ENCODE measurements at regions of chr16 and their contacts with region 1.

Region 1: GRCh38 chr16:3880623-3881498 is at the start of gene CREBBP:
- DNase-seq: peak; percentile 82 to 94 (median 91)
- ATAC-seq: peak; percentile 79 to 93 (median 91)
- H3K4me3 ChIP-seq: peak within 1 kb of the TSS; percentile 60 to 96 (median 86)
- H3K27ac ChIP-seq: peak within 1 kb of the TSS; percentile 65 to 93 (median 84)
- H3K4me1 ChIP-seq: peaks cover 2 to 39% (median 30%) of the 10 kb centered on the region in 12 donors
- H3K27me3 ChIP-seq: no peaks in the 10 kb centered on the region
- CTCF ChIP-seq: no peak
- POLR2A ChIP-seq: peak in 1 of 2 donors; percentile 74
- total RNA-seq, gene CREBBP: 20.0 to 77.6 (median 45.9) TPM

Region 2: DNA sequence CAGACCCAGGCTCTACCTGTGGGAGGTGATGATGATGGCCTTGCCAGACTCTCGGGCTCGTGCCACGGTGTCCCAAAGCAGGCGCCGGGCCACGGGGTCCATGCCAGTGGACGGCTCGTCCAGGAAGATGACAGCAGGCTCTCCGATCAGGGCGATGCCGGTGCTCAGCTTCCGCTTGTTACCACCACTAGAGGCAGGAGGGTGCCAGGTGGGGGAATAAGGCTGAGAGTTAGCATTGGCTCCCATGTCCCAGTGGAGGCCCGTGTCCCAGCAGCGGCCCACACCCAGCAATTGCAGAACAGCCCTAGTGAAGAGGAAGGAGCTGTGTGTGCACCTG is 1602.6 kb before region 1 on chr16:
- intact Hi-C with region 1: no loop called
- DNase-seq: no peak
- ATAC-seq: no peak
- H3K4me3 ChIP-seq: no peak overlapping the region
- H3K27ac ChIP-seq: no peak overlapping the region
- H3K4me1 ChIP-seq: peaks cover 0 to 3% (median 0%) of the 10 kb centered on the region in 12 donors
- H3K27me3 ChIP-seq: no peaks in the 10 kb centered on the region
- CTCF ChIP-seq: no peak
- POLR2A ChIP-seq: no peak

Region 3: DNA sequence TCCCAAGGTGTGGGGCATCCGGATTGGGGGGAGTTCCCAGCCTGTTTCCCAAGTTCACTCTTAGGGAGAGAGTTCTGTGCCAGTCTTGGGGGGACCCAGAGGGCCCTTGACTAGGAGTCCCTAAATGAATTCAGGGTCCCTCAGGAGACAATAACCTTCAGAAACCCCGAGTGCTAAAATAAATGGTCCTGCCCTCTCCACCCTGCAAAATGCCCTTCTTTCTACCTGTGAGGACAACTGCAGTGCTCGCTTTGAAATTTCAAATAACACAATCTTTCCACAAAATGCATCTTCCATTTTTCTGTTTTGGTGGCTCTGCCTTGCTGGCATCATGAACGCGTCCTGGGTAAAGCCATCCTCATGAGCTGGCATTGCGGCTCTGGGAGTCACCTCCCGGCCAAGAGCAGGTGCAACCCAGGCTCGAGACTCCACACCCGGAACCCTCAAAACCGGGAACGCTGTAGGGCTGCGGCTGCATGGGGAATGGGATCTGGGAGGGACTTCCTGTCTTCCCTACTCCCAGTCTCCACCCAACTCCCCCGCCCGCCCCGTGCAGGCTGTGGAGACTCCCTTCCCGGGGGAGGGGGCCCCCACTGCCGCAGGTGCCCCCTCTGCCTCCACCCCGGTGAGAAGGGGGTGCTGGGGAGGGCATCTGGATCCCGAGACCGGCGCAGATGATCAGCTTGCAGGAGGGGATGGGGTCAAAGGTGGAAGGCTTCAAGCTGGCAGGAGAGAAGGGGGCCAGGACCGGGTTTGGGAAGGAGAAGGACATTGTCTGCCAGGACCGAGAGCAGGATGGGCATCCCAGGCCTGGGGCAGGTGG is 768.6 kb before region 1 on chr16 and contains the start of gene ZNF205:
- intact Hi-C with region 1: no loop called
- DNase-seq: peak; percentile 84 to 87 (median 85)
- ATAC-seq: peak; percentile 81 to 97 (median 94)
- H3K4me3 ChIP-seq: peak within 1 kb of the TSS; percentile 40 to 97 (median 85)
- H3K27ac ChIP-seq: peak within 1 kb of the TSS; percentile 12 to 89 (median 76)
- H3K4me1 ChIP-seq: peaks cover 0 to 37% (median 26%) of the 10 kb centered on the region in 12 donors
- H3K27me3 ChIP-seq: peaks cover 0 to 3% (median 0%) of the 10 kb centered on the region in 9 donors
- CTCF ChIP-seq: no peak
- POLR2A ChIP-seq: peak in 1 of 2 donors; percentile 16
- total RNA-seq, gene ZNF205: 7.4 to 19.8 (median 8.1) TPM

Region 4: DNA sequence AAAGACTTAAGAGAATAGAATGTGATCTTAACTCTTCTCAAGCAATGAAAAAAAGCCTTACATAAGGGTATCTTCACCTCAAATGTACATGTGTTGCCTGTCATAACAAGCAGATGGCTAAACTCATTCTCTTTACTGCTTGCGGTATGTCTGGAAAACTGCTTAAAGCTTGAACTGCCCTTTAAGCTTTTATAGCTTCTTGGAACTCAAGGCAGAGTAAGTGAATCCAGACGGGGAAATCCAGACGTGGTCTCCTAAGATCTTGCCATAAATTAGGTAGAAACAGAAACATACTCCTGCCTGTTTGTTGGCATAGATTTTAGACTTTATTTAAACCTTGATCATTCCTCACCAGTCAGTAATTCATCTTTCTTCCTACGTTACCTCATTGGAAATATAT is 360.4 kb before region 1 on chr16:
- intact Hi-C with region 1: loop called in 4 of 10 experiments (anchors 5 to 10 kb)
- DNase-seq: no peak
- ATAC-seq: no peak
- H3K4me3 ChIP-seq: no peak overlapping the region
- H3K27ac ChIP-seq: peak overlapping the region in 1 of 12 donors; percentile 79
- H3K4me1 ChIP-seq: no peaks in the 10 kb centered on the region
- H3K27me3 ChIP-seq: no peaks in the 10 kb centered on the region
- CTCF ChIP-seq: no peak
- POLR2A ChIP-seq: no peak

Region 5: DNA sequence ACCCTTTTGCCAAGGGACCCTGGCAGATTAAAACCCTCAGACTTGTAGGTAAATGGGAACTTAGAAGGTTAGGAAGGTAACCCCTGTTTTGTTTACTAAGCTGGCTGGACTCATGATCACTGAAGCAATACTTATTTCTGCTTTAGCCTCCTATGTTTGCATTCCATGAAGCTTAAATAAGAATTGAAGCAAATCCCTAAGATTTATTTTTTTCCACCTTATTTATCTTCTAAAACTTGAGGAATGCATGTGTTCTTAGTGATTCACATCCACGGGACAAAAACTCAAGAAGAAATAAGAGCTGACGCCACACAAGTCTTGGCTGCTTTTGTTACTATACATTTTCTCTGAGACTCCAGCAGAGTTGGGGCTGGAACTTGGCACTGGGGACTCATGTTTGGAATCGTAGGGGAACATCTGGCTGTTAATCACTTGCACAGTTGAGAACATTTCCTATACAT is 344.6 kb before region 1 on chr16:
- intact Hi-C with region 1: loop called in 1 of 10 experiments (anchors 10 kb)
- DNase-seq: no peak
- ATAC-seq: no peak
- H3K4me3 ChIP-seq: no peak overlapping the region
- H3K27ac ChIP-seq: peak overlapping the region in 7 of 12 donors; percentile 6 to 70 (median 53)
- H3K4me1 ChIP-seq: peaks cover 0 to 9% (median 1%) of the 10 kb centered on the region in 12 donors
- H3K27me3 ChIP-seq: no peaks in the 10 kb centered on the region
- CTCF ChIP-seq: no peak
- POLR2A ChIP-seq: no peak

Region 6: GRCh38 chr16:3690470-3690928 is 190.4 kb before region 1 on chr16:
- intact Hi-C with region 1: loop called in 9 of 10 experiments (anchors 1 to 5 kb)
- DNase-seq: peak; percentile 89 to 94 (median 92)
- ATAC-seq: peak; percentile 86 to 96 (median 94)
- H3K4me3 ChIP-seq: peak overlapping the region in 10 of 12 donors; percentile 27 to 56 (median 43)
- H3K27ac ChIP-seq: peak overlapping the region in 10 of 12 donors; percentile 14 to 72 (median 56)
- H3K4me1 ChIP-seq: peaks cover 0 to 20% (median 15%) of the 10 kb centered on the region in 12 donors
- H3K27me3 ChIP-seq: no peaks in the 10 kb centered on the region
- CTCF ChIP-seq: peak; percentile 90 to 99 (median 95)
- POLR2A ChIP-seq: no peak

Region 7: DNA sequence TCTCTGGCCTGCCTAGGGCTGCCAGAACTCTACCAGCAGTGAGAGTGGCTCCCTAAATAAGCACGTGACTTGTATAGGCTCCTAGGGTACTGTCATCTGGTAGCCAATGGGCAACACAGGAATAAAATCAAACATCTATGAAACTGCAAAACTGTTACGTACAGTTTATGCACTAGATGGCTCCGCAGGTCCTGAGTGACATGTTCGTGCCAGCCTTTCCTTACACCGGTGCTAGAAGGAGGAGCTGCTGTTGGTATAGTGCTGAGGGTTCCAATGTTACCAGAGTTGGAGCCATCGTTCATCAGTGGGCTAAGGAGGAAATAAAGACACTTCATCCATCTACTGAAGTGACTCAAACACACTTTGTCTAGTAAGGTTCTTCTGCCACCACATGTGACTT is 100.3 kb before region 1 on chr16:
- intact Hi-C with region 1: loop called in 3 of 10 experiments (anchors 5 to 10 kb)
- DNase-seq: no peak
- ATAC-seq: peak in 2 of 4 donors; percentile 62 to 68
- H3K4me3 ChIP-seq: no peak overlapping the region
- H3K27ac ChIP-seq: no peak overlapping the region
- H3K4me1 ChIP-seq: peaks cover 0 to 10% (median 0%) of the 10 kb centered on the region in 12 donors
- H3K27me3 ChIP-seq: no peaks in the 10 kb centered on the region
- CTCF ChIP-seq: peak in 2 of 12 donors; percentile 7 to 18
- POLR2A ChIP-seq: no peak

Region 8: DNA sequence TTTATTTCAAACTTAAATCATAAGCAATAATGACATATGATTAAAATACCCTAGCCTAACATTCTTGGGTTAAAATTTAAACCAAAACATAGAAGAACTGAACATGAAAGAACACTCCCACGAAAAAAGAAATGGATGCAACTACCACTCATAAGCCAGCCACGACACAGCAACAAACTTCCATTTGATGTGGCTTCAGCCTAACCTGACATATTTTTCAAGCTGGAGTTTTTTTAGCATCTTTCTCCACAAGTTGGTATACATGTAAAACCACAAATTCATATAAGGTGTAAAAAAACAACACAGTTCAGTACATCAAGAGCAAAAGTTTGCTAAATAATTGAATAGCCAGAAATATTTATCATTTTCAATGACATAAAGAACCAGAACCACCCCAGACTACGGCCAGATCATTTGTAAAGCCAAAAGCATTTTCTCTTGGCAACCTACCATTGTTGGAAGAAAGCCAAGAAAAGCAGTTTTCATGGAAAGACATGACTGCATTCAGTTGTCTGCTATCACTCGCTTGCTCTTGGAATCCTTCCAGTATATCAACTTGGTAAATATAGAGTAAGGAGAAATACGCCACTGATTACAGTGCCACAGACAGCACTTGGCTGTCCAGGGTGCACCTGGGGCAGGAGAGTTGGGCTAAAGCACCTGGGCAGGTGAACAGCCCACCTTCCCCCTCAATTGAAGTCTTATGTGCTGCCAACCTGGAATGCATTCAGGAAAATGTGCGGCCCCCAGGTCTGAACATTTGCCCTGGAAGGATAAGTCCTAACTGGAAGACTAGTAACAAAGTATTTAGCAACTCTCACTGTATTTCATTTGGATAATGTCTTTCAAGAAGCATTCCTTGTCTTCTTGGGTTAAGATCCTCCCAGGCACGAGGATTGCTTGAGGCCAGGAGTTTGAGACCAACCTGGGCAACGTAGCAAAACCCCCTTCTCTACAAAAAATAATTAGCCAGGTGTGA is 60.8 kb before region 1 on chr16:
- intact Hi-C with region 1: loop called in 1 of 10 experiments (anchors 10 kb)
- DNase-seq: peak in 2 of 5 donors; percentile 44 to 66
- ATAC-seq: peak; percentile 80 to 86 (median 84)
- H3K4me3 ChIP-seq: peak overlapping the region in 1 of 12 donors; percentile 8
- H3K27ac ChIP-seq: peak overlapping the region in 4 of 12 donors; percentile 10 to 61 (median 44)
- H3K4me1 ChIP-seq: peaks cover 18 to 97% (median 88%) of the 10 kb centered on the region in 12 donors
- H3K27me3 ChIP-seq: no peaks in the 10 kb centered on the region
- CTCF ChIP-seq: no peak
- POLR2A ChIP-seq: no peak

Region 9: GRCh38 chr16:3849751-3850543 is 30.9 kb before region 1 on chr16:
- intact Hi-C with region 1: loop called in 1 of 10 experiments (anchors 2 kb)
- DNase-seq: no peak
- ATAC-seq: peak in 2 of 4 donors; percentile 35 to 40
- H3K4me3 ChIP-seq: no peak overlapping the region
- H3K27ac ChIP-seq: peak overlapping the region in 2 of 12 donors; percentile 10 to 41
- H3K4me1 ChIP-seq: peaks cover 0 to 69% (median 33%) of the 10 kb centered on the region in 12 donors
- H3K27me3 ChIP-seq: no peaks in the 10 kb centered on the region
- CTCF ChIP-seq: no peak
- POLR2A ChIP-seq: no peak